ENCODE measurements at regions of chr2 and their contacts with region 1.

Region 1: GRCh38 chr2:70190418-70191243 is at the start of gene C2orf42:
- DNase-seq: peak; percentile 97 to 98
- ATAC-seq: peak; percentile 99
- H3K4me3 ChIP-seq: peak within 1 kb of the TSS; percentile 65 to 81
- H3K27ac ChIP-seq: peak within 1 kb of the TSS; percentile 90 to 98
- H3K4me1 ChIP-seq: no peaks in the 10 kb centered on the region
- H3K27me3 ChIP-seq: no peaks in the 10 kb centered on the region
- total RNA-seq, gene C2orf42: 12.4 to 17.9 TPM

Region 2: GRCh38 chr2:70115646-70116442 is 74.8 kb before region 1 on chr2:
- intact Hi-C with region 1: no loop called
- DNase-seq: peak in 1 of 2 donors; percentile 48
- ATAC-seq: no peak
- H3K4me3 ChIP-seq: no peak overlapping the region
- H3K27ac ChIP-seq: no peak overlapping the region
- H3K4me1 ChIP-seq: no peaks in the 10 kb centered on the region
- H3K27me3 ChIP-seq: no peaks in the 10 kb centered on the region

Region 3: DNA sequence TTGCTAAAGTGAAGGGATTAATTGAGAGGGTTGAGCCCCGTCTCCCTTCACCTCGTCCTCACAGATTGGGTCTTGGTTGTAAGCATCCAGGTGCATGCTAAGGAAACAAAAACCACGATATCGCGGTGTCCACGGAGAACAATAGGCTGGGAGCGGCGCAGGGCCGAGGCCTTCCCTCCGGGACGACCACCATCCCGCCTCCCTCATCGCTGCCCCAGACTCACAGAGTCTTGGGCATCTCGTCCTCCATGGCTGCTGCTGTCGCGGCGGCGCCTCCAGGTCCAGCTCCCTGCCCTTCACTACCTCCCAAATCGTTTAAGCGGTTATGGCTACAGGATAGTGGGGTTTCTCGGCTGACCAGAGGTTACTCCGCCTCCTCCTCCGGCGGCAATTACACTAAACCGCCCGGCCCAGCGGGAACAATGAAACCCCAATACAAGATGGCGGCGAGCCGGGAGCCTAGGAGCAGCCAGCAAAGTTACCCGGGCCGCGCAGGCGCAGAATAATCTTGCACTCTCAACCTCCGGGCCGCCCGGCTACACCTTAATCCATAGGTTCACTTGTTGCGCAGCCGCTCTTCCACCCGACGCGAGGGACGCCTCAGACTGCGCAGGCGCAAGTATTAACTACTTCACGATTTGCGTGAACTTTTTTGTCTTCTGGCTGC is 57.7 kb after region 1 on chr2 and contains the start of gene TIA1:
- intact Hi-C with region 1: loop called in 1 of 2 experiments (anchors 2 kb)
- DNase-seq: peak; percentile 99
- ATAC-seq: peak; percentile 99
- H3K4me3 ChIP-seq: peak within 1 kb of the TSS; percentile 86
- H3K27ac ChIP-seq: peak within 1 kb of the TSS; percentile 91 to 93
- H3K4me1 ChIP-seq: peaks cover 0 to 5% of the 10 kb centered on the region in 2 donors
- H3K27me3 ChIP-seq: no peaks in the 10 kb centered on the region
- total RNA-seq, gene TIA1: 87.6 to 150 TPM

Region 4: GRCh38 chr2:70283500-70284191 is 93.0 kb after region 1 on chr2:
- intact Hi-C with region 1: loop called in 1 of 2 experiments (anchors 10 kb)
- DNase-seq: no peak
- ATAC-seq: no peak
- H3K4me3 ChIP-seq: no peak overlapping the region
- H3K27ac ChIP-seq: no peak overlapping the region
- H3K4me1 ChIP-seq: no peaks in the 10 kb centered on the region
- H3K27me3 ChIP-seq: no peaks in the 10 kb centered on the region